A673 (cell line): ENCODE measurements at regions of chr2 and their contacts with region 1.

Region 1: DNA sequence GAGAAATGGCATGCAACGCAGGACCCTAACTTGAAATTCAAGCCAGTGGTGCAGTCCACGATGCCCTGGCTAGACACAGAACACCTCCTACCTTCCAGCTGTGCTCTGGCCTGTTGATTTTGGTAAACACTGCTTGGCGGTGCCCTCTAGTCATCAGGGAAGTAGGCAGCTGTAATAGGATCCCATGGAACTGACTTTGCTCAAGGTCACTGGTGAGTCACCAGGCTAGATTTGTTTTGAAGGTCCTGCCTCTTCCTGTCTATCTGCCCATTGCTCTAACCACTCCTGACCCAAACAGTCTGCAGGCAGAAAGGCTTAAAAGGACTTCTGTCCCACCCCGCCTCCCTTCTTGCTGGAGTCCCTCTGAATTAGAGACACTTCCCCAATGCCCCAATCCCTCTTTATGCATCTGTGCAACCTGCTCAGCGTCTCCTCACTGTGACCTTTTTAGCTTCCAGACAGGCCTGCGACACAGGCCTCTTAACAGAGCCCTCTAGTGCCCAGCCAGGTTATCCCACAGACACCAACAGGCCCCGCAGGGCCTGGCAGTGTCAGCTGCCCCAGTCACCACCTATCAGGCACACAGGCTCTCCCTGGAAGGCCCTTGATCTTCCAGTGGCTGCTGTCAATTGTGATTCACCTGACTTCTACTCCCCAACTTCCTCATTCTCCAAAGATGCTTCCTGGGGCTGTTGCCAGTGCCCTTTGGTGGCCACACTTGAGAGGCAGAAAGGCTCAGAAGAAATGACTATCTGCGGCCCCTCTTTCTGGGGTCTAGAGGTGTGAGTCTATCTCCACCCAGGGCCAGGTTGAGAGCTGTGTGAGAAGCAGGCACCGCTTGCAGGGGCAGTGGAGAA is 5.2 kb downstream of the TMEM127 start:
- DNase-seq: no peak
- H3K4me3 ChIP-seq: no peak overlapping the region
- H3K27ac ChIP-seq: peak overlapping the region; percentile 13
- H3K4me1 ChIP-seq: no peaks in the 10 kb centered on the region
- H3K27me3 ChIP-seq: no peaks in the 10 kb centered on the region
- CTCF ChIP-seq: 0 out of 2 replicates have a peak, but pooled peaks have one; percentile 13

Region 2: GRCh38 chr2:96218508-96219131 is 42.0 kb before region 1 on chr2:
- CTCF ChIA-PET with region 1: no interaction called
- POLR2A ChIA-PET with region 1: no interaction called
- intact Hi-C with region 1: loop called (anchors 5 kb)
- DNase-seq: no peak
- H3K4me3 ChIP-seq: no peak overlapping the region
- H3K27ac ChIP-seq: no peak overlapping the region
- H3K4me1 ChIP-seq: no peaks in the 10 kb centered on the region
- H3K27me3 ChIP-seq: no peaks in the 10 kb centered on the region
- CTCF ChIP-seq: no peak

Region 3: GRCh38 chr2:96449637-96450036 is 189.0 kb after region 1 on chr2:
- CTCF ChIA-PET with region 1: no interaction called
- POLR2A ChIA-PET with region 1: no interaction called
- intact Hi-C with region 1: no loop called
- DNase-seq: no peak
- H3K4me3 ChIP-seq: no peak overlapping the region
- H3K27ac ChIP-seq: no peak overlapping the region
- H3K4me1 ChIP-seq: no peaks in the 10 kb centered on the region
- H3K27me3 ChIP-seq: no peaks in the 10 kb centered on the region
- CTCF ChIP-seq: no peak